WTC11 (cell line): ENCODE measurements at regions of chr7 and their contacts with region 1.

Region 1: DNA sequence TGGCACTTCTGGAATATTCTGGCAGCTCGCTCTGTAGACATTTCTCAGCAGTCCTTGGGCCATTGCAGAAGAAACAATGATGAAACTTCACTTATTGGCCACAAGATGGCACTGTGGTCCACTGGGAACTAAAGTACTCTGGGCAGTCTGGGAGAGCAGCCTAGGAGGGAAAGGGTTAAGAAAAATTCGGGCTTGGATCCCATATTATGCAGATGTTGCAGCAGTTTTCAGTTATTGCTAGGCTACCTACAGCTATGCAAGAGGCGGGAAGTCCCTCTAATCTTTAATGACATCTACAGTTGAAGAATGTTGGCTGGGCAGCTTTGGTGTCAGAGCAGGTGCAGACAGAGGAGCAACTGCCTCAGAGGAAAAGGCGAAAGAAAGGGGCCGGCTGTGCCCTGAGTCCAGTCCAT is 201.7 kb upstream of the PRSS58 start:
- DNase-seq: no peak
- ATAC-seq: peak; percentile 94
- H3K4me3 Mint-ChIP-seq: no peak overlapping the region
- H3K27ac Mint-ChIP-seq: no peak overlapping the region
- H3K4me1 Mint-ChIP-seq: peaks cover 13% of the 10 kb centered on the region
- H3K27me3 Mint-ChIP-seq: no peaks in the 10 kb centered on the region; the same call in 1 of the 2 replicates
- CTCF ChIP-seq: peak; percentile 65

Region 2: DNA sequence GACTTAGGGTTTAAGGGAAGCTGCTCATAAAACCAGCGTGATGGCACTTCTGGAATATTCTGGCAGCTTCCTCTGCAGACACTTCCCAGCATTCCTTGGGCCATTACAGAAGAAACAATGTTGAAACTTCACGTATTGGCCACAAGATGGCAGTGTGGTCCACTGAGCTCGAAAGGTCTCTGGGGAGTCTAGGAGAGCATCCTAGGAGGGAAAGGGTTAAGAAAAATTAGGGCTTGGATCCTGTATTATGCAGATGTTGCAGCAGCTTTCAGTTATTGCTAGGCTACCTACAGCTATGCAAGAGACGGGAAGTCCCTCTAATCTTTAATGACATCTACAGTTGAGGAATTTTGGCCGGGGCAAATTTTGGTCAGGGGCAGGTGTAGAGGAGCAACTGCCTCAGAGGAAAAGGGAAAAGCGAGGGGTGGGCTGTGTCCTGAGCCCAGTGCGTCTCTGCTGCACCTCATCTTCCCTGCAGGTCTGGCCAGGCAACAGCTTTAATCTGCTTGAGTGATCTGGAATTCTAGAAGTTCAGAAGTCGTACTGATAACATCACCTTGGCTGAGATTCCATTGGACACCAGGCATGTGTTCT is 19.0 kb after region 1 on chr7:
- CTCF ChIA-PET with region 1: interaction called, 39 read pairs
- POLR2A ChIA-PET with region 1: no interaction called
- DNase-seq: peak; percentile 38
- ATAC-seq: peak; percentile 79
- H3K4me3 Mint-ChIP-seq: no peak overlapping the region
- H3K27ac Mint-ChIP-seq: no peak overlapping the region
- H3K4me1 Mint-ChIP-seq: peaks cover 11% of the 10 kb centered on the region
- H3K27me3 Mint-ChIP-seq: peaks cover 12% of the 10 kb centered on the region
- CTCF ChIP-seq: peak; percentile 62

Region 3: DNA sequence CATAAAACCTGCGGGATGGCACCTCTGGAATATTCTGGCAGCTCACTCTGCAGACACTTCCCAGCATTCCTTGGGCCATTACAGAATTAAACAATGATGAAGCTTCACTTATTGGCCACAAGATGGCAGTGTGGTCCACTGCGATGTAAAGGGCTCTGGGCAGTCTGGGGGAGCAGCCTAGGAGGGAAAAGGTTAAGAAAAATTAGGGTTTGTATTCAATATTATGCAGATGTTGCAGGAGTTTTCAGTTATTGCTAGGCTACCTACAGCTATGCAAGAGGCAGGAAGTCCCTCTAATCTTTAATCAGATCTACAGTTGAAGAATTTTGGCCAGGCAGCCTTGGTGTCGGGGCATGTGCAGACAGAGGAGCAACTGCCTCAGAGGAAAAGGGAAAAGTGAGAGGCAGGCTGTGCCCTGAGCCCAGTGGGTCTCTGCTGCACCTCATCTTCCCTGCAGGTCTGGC is 56.5 kb after region 1 on chr7:
- CTCF ChIA-PET with region 1: interaction called, 16 read pairs
- POLR2A ChIA-PET with region 1: no interaction called
- DNase-seq: peak; percentile 26
- ATAC-seq: peak; percentile 92
- H3K4me3 Mint-ChIP-seq: no peak overlapping the region
- H3K27ac Mint-ChIP-seq: no peak overlapping the region
- H3K4me1 Mint-ChIP-seq: peaks cover 9% of the 10 kb centered on the region
- H3K27me3 Mint-ChIP-seq: peaks cover 5% of the 10 kb centered on the region; the same call in 1 of the 2 replicates
- CTCF ChIP-seq: peak; percentile 41; the same call in 1 of the 2 replicates

Region 4: DNA sequence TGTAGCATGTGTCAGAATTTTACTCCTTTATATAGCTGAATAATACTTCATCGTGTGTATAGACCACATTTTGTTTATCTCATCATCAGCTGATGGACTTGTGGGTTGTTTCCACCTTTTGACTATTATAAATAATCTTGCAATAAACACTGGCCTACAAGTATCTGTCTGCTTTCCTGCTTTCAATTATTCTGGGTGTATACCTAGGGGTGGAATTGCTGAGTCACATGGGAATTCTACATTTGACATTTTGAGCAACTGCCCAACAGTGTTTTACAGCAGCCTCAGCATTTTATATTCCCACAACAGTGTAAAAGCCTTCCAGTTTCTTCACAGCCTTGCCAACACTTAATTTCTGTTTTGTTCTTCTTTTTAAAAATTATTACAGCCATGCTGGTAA is 89.4 kb after region 1 on chr7:
- CTCF ChIA-PET with region 1: no interaction called
- POLR2A ChIA-PET with region 1: no interaction called
- DNase-seq: no peak
- ATAC-seq: no peak
- H3K4me3 Mint-ChIP-seq: no peak overlapping the region
- H3K27ac Mint-ChIP-seq: no peak overlapping the region
- H3K4me1 Mint-ChIP-seq: no peaks in the 10 kb centered on the region
- H3K27me3 Mint-ChIP-seq: no peaks in the 10 kb centered on the region
- CTCF ChIP-seq: no peak